WTC11 (cell line): ENCODE measurements at regions of chr16 and their contacts with region 1.

Region 1: GRCh38 chr16:55622930-55623561 is 32.7 kb upstream of the SLC6A2 start:
- DNase-seq: peak; percentile 73
- ATAC-seq: peak; percentile 97
- H3K4me3 Mint-ChIP-seq: no peak overlapping the region
- H3K27ac Mint-ChIP-seq: peak overlapping the region; percentile 21; the same call in 1 of the 2 replicates
- H3K4me1 Mint-ChIP-seq: peaks cover 17% of the 10 kb centered on the region
- H3K27me3 Mint-ChIP-seq: peaks cover 10% of the 10 kb centered on the region
- CTCF ChIP-seq: peak; percentile 28; the same call in 1 of the 2 replicates

Region 2: DNA sequence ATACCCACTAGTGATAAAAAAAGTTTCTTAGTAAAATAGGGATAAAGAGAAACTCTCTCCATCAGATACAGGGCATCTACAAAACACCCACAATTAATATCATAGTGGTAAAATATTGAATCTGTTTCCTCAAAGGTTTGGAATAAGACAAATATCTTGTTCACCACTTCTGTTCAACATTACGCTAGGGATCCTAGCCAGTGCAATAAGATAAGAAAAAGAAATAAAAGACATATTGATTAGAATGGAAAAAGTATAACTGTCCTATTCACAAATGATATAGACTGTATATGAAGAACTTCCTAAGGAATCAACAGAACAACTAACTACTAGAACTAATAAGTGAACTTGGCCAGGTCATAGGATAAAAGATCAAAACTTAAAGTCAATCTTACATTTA is 101.3 kb before region 1 on chr16:
- CTCF ChIA-PET with region 1: no interaction called
- POLR2A ChIA-PET with region 1: no interaction called
- DNase-seq: no peak
- ATAC-seq: no peak
- H3K4me3 Mint-ChIP-seq: no peak overlapping the region
- H3K27ac Mint-ChIP-seq: no peak overlapping the region
- H3K4me1 Mint-ChIP-seq: peaks cover 5% of the 10 kb centered on the region
- H3K27me3 Mint-ChIP-seq: no peaks in the 10 kb centered on the region; the same call in none of the 2 replicates
- CTCF ChIP-seq: no peak

Region 3: DNA sequence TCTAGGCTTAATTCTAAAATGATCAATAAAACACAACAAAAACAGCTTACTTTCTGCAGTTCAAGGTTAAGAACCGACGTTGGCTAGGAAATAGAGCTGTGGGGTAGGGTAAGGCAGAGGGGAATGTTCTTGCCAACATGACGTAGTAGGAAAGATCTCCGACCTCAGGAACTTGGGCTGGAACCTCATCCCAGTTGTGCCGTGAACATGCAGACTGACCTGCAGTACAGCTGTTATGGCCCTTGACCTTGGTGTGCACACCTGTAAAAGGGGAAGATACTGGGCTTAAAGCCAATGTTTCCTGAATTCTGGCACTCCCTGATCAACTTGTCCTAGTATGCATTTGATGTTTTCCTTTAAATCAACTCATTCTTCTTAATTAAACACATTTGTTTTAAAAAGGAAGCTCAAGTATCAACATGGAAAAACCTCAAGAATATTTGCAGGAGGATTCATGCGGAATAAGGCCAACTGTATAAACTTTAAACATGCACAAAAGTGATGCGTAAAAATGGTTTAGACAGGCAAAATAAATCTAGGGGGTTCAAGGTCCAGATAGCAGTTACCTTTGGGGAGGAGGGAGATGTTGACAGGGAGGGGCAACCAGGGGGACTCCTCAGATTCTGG is 18.5 kb after region 1 on chr16:
- CTCF ChIA-PET with region 1: interaction called, 10 read pairs
- POLR2A ChIA-PET with region 1: no interaction called
- DNase-seq: no peak
- ATAC-seq: no peak
- H3K4me3 Mint-ChIP-seq: no peak overlapping the region
- H3K27ac Mint-ChIP-seq: no peak overlapping the region
- H3K4me1 Mint-ChIP-seq: peaks cover 14% of the 10 kb centered on the region
- H3K27me3 Mint-ChIP-seq: peaks cover 7% of the 10 kb centered on the region; the same call in 1 of the 2 replicates
- CTCF ChIP-seq: no peak

Region 4: DNA sequence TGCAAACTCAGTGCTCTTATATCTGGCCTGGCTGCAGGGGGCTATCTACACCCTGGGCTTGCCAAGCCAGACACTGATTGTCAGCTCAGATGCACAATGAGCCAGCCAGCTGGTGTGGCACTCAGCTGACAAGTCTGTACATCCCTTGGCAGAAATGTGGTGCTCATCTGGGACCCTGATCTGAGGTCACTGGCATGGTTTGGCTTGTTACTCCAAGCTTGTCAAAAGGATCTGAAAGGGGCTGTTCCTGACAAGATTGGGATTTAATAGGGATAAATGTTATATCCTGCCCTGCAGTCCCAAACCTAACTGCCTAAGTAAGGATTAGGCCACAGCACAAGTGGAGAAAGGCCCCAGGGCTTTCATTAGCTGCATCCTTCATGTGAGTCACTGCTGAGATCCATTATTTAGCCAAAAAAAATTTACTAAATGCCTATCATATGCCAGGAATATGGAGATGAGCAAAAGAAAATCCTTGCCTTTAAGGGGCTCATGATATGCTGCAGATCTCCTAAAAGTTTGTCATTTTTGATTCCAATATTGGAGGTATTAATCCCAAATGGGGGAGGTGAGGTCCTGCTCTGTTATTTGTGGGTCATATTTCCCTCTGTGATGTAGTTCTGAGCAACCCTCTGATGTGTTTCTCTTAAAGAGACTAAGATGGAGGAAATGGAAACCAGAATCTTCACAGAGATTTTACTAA is 39.0 kb after region 1 on chr16:
- CTCF ChIA-PET with region 1: interaction called, 15 read pairs
- POLR2A ChIA-PET with region 1: no interaction called
- DNase-seq: no peak
- ATAC-seq: no peak
- H3K4me3 Mint-ChIP-seq: no peak overlapping the region
- H3K27ac Mint-ChIP-seq: no peak overlapping the region
- H3K4me1 Mint-ChIP-seq: peaks cover 3% of the 10 kb centered on the region; the same call in 1 of the 2 replicates
- H3K27me3 Mint-ChIP-seq: peaks cover 34% of the 10 kb centered on the region
- CTCF ChIP-seq: no peak

Region 5: DNA sequence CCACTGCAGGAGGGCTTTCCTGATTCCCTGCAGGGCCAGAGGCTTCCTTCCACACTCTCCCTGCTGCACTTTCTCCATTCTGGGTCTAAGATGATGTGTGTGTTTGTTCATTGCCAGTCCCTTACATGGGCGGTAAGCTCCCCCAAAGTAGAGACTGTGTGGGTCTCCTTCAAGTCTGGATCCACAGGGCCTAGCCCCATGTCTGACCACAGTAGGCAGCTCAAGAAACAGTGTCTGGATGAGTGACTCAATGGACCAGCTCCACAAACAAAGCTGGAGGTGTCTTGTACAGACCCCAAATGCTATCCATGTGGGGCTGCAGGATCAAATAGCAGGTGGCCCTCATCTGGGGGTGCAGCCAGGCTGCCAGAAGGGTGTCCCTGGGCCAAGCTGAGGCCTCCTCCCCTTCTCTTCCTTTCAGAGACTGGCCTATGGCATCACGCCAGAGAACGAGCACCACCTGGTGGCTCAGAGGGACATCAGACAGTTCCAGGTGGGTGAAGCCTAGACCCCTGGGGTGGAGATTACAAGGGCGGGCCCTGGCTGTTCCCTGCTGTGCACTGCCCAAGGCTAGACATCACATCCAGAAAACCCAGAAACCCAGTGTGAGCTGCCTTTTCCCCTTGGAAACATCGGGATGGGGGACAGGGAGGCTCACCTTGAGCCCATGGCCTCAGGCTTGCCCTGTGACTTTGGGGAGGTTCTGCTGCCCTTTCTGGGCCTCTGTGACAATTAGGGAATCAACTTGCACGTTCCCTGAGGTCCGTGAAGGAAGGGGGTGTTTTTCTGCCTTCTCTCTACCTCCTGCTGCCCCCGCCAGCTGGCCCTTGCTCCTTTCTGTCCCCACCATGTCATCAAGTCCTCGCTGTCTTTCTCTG is 78.6 kb after region 1 on chr16:
- CTCF ChIA-PET with region 1: interaction called, 12 read pairs
- POLR2A ChIA-PET with region 1: no interaction called
- DNase-seq: peak; percentile 71
- ATAC-seq: peak; percentile 83
- H3K4me3 Mint-ChIP-seq: no peak overlapping the region
- H3K27ac Mint-ChIP-seq: no peak overlapping the region
- H3K4me1 Mint-ChIP-seq: peaks cover 32% of the 10 kb centered on the region
- H3K27me3 Mint-ChIP-seq: no peaks in the 10 kb centered on the region
- CTCF ChIP-seq: peak; percentile 70